ENCODE measurements at regions of chr14 and their contacts with region 1.

Region 1: GRCh38 chr14:65412032-65412846 is at the start of gene FUT8:
- DNase-seq: peak; percentile 95 to 98 (median 96)
- ATAC-seq: peak; percentile 90
- H3K4me3 ChIP-seq: peak within 1 kb of the TSS; percentile 45
- H3K4me1 ChIP-seq: peaks cover 4% of the 10 kb centered on the region
- CTCF ChIP-seq: peak; percentile 49
- total RNA-seq, gene FUT8: 24.7 to 38.1 (median 32.2) TPM

Region 2: DNA sequence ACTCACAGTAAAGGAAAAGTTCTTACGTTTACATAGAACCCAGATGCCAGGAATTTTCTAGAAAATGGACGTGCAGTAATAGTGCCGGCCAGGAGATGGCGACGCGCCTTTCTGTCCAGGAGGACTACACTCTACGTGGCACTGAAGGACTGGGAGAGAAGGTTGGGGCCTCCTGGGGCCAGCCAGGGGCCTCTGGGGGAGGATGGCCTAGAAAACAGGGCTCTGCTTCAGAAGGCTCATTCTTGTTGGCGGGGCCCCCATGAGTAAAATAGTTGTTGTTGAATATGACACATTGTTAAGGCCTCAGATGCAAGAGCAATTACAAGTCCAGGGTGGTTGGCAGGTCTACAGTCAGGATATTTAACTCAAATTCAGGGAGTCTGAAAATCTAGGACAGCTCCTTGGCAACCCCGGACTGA is 189.8 kb before region 1 on chr14:
- intact Hi-C with region 1: loop called in 1 of 2 experiments (anchors 10 kb)
- DNase-seq: peak; percentile 65 to 81 (median 74)
- ATAC-seq: peak; percentile 57
- H3K4me3 ChIP-seq: no peak overlapping the region
- H3K4me1 ChIP-seq: peaks cover 13% of the 10 kb centered on the region
- CTCF ChIP-seq: peak; percentile 70

Region 3: GRCh38 chr14:65824285-65824977 is 412.2 kb after region 1 on chr14:
- intact Hi-C with region 1: loop called (anchors 5 to 10 kb)
- DNase-seq: peak in 2 of 3 donors; percentile 40 to 65
- ATAC-seq: peak; percentile 90
- H3K4me3 ChIP-seq: no peak overlapping the region
- H3K4me1 ChIP-seq: no peaks in the 10 kb centered on the region
- CTCF ChIP-seq: peak; percentile 84